Heart right ventricle (tissue), 16 donors: ENCODE measurements at regions of chr22 and their contacts with region 1.

Region 1: DNA sequence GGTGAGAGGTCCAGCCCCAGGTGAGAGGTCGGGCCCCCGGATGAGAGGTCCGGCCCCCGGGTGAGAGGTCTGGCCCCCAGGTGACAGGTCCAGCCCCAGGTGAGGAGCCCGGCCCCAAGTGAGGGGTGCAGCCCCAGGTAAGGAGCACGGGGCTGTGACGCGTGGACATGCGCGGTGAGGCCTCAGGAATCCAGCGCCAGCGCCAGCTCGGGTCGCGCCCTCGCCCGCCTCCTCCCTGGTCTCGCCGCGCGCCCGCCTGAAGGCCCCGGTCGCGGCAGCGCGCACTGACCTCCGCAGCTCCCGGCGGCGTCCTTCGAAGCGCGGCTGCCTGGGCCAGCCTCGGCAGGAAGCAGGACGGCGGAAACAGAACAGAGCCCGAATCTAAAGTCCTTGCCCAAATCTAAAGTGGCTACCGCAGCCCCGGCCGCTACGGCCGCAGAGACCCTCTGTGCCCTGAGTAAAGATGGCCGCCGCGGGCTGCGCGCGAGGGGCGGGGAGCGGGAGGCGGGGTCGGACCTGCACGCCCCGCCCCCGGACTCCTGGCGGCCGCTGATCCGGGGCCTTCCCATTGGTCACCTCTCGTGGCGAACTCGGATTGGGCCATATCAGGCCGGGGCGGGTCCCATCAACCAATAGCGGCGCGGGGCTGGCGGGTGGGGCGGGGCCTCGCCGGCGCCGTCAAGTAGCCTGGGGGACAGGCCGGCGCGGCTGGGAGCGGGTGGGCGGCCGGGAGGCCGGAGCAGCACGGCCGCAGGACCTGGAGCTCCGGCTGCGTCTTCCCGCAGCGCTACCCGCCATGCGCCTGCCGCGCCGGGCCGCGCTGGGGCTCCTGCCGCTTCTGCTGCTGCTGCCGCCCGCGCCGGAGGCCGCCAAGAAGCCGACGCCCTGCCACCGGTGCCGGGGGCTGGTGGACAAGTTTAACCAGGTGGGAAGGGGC is at the starts of genes ALG12 and CRELD2:
- DNase-seq: peak; percentile 97 to 98
- ATAC-seq: peak; percentile 96 to 99 (median 98)
- H3K4me3 ChIP-seq: peak within 1 kb of the TSS; percentile 83 to 97 (median 88)
- H3K27ac ChIP-seq: peak within 1 kb of the TSS; percentile 87 to 98 (median 94)
- H3K4me1 ChIP-seq: peaks cover 8 to 25% (median 20%) of the 10 kb centered on the region in 9 donors
- H3K27me3 ChIP-seq: no peaks in the 10 kb centered on the region
- CTCF ChIP-seq: peak in 2 of 9 donors; percentile 9 to 19
- total RNA-seq, gene ALG12: 9.6 to 19.8 (median 16.0) TPM
- total RNA-seq, gene CRELD2: 13.0 to 32.5 (median 19.2) TPM

Region 2: DNA sequence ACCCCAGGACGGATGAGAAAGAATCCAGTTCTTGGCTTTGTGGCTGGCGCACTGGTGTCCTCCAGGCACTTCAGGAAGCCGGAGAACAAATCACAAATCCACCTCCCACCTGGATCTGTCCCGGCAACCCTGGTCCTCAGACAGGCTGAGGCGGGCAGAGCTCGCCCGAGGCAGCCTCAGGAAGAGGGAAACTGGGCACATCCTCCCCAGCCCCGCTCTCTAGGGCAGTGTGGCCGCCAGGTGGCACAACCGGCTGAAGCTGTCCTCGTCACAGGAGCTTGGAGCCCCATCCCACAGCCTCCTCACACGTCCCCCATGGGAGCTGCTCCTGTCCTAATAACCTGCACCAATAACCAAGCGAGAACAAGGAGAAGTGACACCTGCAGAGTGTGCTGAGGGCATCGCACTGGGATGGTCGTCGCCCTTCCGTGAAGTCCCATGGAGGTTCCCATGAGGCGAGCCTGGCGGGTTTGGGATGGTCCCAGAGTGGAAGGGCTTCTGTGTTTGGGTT is 484.1 kb before region 1 on chr22:
- intact Hi-C with region 1: no loop called
- DNase-seq: no peak
- ATAC-seq: no peak
- H3K4me3 ChIP-seq: no peak overlapping the region
- H3K27ac ChIP-seq: no peak overlapping the region
- H3K4me1 ChIP-seq: no peaks in the 10 kb centered on the region
- H3K27me3 ChIP-seq: peaks cover 0 to 23% (median 8%) of the 10 kb centered on the region in 7 donors
- CTCF ChIP-seq: no peak

Region 3: DNA sequence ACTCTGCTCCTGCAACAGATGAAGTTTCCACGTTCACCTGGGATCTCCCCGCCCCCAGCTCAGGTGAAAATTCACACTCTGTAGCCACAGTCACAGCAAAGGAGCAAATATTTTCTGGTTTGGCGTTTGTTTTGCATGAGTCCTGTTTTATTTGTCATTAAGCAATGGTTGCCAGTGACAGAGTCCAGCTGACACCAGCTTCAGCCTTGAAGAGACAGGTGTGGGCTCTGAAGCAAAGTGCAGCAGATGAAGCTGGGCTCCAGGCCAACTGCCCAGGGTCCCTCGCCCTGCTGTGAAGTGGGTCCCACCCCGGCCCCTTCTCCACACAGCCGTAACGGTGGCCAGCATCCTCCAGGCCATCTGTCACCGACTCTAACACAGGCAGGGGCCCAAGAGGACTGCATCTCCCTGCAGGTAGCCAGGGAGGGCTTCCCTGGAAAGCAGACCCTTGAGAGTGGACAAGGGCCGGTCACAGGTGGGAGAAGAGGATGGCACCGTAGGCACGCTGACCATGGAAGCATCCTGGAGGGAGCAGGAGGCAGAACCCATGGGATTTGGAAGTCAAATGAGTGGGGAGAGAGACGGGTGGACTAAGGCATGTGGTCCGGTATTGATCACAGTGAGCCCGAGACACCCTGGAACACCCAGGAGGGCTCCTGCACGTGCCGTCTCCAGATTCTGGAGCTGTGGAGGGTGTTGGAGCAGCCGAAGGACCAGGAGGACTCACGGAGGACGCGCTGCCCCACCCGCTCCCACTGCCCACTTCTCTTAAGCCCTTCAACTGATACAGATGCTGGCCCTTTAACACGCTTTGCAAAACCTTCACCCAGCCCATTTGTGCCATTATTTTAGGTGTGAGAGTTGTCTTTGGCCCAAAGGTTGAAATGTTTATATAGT is 385.1 kb before region 1 on chr22:
- intact Hi-C with region 1: no loop called
- DNase-seq: no peak
- ATAC-seq: no peak
- H3K4me3 ChIP-seq: no peak overlapping the region
- H3K27ac ChIP-seq: no peak overlapping the region
- H3K4me1 ChIP-seq: no peaks in the 10 kb centered on the region
- H3K27me3 ChIP-seq: peaks cover 0 to 20% (median 11%) of the 10 kb centered on the region in 7 donors
- CTCF ChIP-seq: no peak

Region 4: DNA sequence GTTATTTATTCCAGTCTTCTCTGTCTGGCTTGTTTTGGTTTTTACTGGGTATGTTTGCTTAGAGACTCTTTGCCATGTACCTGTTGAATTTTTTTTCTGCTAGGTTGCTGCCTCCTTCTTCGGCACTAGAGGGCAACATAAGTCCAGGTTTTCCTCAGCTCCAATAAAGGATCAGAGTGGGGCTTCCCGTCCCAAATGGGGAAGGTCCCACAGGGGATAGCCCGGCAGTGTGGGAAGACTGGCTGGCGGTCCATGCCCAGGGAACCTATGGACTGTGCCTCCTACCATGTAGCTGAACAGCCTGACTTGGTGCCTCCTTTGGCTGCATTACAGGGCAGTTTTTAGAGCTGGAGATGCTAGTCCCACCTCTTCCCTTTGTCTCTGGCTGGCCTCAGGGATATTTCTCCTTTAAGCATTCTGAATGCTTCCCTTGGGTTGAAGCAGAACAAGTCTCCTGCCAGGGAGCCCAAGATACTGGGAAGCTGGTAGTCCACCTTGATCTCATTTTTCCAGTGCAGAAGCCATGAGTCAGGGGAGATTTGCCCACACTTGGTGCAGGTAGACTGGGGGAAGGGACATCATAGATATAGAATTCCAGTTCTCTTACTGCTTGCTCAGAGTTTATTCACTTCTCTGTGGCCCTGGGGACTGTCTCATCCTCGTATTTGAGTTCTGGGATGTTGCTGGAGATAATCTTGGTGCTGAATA is 150.7 kb before region 1 on chr22:
- intact Hi-C with region 1: loop called in 6 of 10 experiments (anchors 5 to 10 kb)
- DNase-seq: no peak
- ATAC-seq: peak in 3 of 8 donors; percentile 23 to 33 (median 24)
- H3K4me3 ChIP-seq: no peak overlapping the region
- H3K27ac ChIP-seq: no peak overlapping the region
- H3K4me1 ChIP-seq: peaks cover 0 to 10% (median 0%) of the 10 kb centered on the region in 9 donors
- H3K27me3 ChIP-seq: no peaks in the 10 kb centered on the region
- CTCF ChIP-seq: peak in 8 of 9 donors; percentile 30 to 75 (median 60)

Region 5: GRCh38 chr22:49779853-49780697 is 138.2 kb before region 1 on chr22:
- intact Hi-C with region 1: loop called in 4 of 10 experiments (anchors 5 to 10 kb)
- DNase-seq: no peak
- ATAC-seq: peak in 7 of 8 donors; percentile 6 to 60 (median 49)
- H3K4me3 ChIP-seq: no peak overlapping the region
- H3K27ac ChIP-seq: no peak overlapping the region
- H3K4me1 ChIP-seq: peaks cover 3 to 30% (median 16%) of the 10 kb centered on the region in 9 donors
- H3K27me3 ChIP-seq: no peaks in the 10 kb centered on the region
- CTCF ChIP-seq: no peak

Region 6: GRCh38 chr22:49789289-49790141 is 128.7 kb before region 1 on chr22:
- intact Hi-C with region 1: loop called in 2 of 10 experiments (anchors 5 to 10 kb)
- DNase-seq: peak in 1 of 2 donors; percentile 56
- ATAC-seq: peak; percentile 18 to 71 (median 50)
- H3K4me3 ChIP-seq: peak overlapping the region in 5 of 10 donors; percentile 4 to 31 (median 13)
- H3K27ac ChIP-seq: peak overlapping the region; percentile 30 to 85 (median 75)
- H3K4me1 ChIP-seq: peaks cover 28 to 82% (median 71%) of the 10 kb centered on the region in 9 donors
- H3K27me3 ChIP-seq: no peaks in the 10 kb centered on the region
- CTCF ChIP-seq: no peak

Region 7: GRCh38 chr22:49852898-49853894 is 65.0 kb before region 1 on chr22 and contains the start of gene ZBED4:
- intact Hi-C with region 1: loop called in 3 of 10 experiments (anchors 2 to 5 kb)
- DNase-seq: peak; percentile 95 to 100
- ATAC-seq: peak; percentile 94 to 97 (median 96)
- H3K4me3 ChIP-seq: peak within 1 kb of the TSS; percentile 63 to 90 (median 78)
- H3K27ac ChIP-seq: peak within 1 kb of the TSS; percentile 59 to 97 (median 95)
- H3K4me1 ChIP-seq: peaks cover 19 to 45% (median 42%) of the 10 kb centered on the region in 9 donors
- H3K27me3 ChIP-seq: peaks cover 21 to 27% (median 26%) of the 10 kb centered on the region in 7 donors
- CTCF ChIP-seq: no peak
- total RNA-seq, gene ZBED4: 3.5 to 5.9 (median 4.4) TPM

Region 8: GRCh38 chr22:49960159-49961004 is 42.1 kb after region 1 on chr22 and contains the start of gene PIM3:
- intact Hi-C with region 1: loop called in 1 of 10 experiments (anchors 1 kb)
- DNase-seq: peak; percentile 94 to 95
- ATAC-seq: peak; percentile 79 to 94 (median 88)
- H3K4me3 ChIP-seq: peak within 1 kb of the TSS; percentile 82 to 97 (median 89)
- H3K27ac ChIP-seq: peak within 1 kb of the TSS; percentile 86 to 100 (median 98)
- H3K4me1 ChIP-seq: peaks cover 33 to 61% (median 51%) of the 10 kb centered on the region in 9 donors
- H3K27me3 ChIP-seq: no peaks in the 10 kb centered on the region
- CTCF ChIP-seq: no peak
- total RNA-seq, gene PIM3: 27.4 to 81.6 (median 41.6) TPM